Heart left ventricle (tissue), 16 donors: ENCODE measurements at regions of chr9 and their contacts with region 1.

Region 1: DNA sequence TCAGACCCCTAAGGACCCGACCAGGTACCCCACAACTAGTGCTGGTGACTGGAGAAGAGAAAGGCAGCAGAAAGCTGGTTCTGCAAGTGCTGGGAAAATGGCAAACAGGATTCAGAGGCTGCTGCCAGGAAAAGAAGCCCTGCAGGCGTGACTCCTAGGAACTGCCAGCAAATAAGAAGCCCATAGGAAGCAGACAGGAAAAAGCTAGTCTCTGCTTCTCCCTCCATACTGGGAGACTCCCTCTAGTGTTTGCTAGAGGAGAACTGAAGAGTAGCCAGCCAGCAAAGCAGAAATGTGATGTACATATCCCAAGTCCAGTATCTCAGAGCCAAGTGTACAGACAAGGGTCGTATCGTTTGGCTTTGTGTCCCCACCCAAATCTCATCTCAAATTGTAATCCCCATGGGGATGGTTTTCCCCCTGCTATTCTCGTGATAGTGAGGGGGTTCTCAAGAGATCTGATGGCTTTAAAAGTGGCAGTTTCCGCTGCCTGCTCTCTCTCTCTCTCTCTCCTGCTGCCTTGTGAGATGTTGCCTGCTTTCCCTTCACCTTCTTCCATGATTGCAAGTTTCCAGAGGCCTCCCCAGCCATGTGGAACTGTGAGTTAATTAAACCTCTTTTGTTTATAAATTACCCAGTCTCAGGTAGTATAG is 38.1 kb upstream of the TUSC1 start:
- DNase-seq: peak in 1 of 5 donors; percentile 20
- ATAC-seq: peak; percentile 54 to 78 (median 55)
- H3K4me3 ChIP-seq: no peak overlapping the region
- H3K27ac ChIP-seq: no peak overlapping the region
- H3K4me1 ChIP-seq: no peaks in the 10 kb centered on the region
- H3K27me3 ChIP-seq: no peaks in the 10 kb centered on the region
- CTCF ChIP-seq: peak in 9 of 12 donors; percentile 13 to 56 (median 35)
- POLR2A ChIP-seq: no peak

Region 2: DNA sequence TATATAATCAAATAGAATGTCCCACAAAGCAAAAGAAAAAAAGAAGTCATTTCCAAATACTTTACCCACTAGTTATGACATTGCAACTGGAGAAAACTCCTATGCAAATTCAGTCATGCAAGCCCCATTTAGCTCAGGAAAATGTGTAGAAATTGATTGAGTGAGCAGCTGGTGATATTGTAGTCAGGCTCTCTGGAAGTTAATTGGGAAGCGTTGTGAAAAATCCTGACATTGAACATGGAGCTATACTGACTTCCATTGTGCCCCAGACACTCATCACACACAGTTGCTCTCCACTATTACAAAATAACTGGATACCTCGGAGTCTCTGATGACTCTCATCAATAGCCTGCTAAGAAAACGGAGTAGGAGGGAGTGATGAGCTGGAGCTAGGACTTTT is 87.1 kb before region 1 on chr9:
- intact Hi-C with region 1: loop called in 1 of 10 experiments (anchors 10 kb)
- DNase-seq: no peak
- ATAC-seq: no peak
- H3K4me3 ChIP-seq: no peak overlapping the region
- H3K27ac ChIP-seq: no peak overlapping the region
- H3K4me1 ChIP-seq: no peaks in the 10 kb centered on the region
- H3K27me3 ChIP-seq: no peaks in the 10 kb centered on the region
- CTCF ChIP-seq: no peak
- POLR2A ChIP-seq: no peak

Region 3: DNA sequence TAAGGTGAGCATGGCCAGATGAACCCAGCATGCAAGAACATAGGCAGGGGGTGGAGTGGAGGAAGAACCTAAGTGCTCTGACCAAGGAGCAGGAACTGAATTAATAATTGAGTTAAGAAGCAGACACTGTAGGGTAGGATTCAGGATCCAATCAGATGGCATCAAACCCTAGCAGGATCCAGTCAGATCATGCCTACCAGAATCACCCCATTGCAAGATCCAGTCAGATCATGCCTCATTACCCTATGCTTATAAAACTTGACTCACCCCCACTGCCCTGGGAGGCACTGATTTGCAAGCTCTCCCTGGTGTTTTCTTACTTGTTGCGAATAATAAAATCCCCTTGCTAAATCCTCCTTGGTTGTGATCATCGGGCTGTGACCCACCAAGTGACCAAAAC is 57.8 kb before region 1 on chr9:
- intact Hi-C with region 1: no loop called
- DNase-seq: no peak
- ATAC-seq: no peak
- H3K4me3 ChIP-seq: no peak overlapping the region
- H3K27ac ChIP-seq: no peak overlapping the region
- H3K4me1 ChIP-seq: no peaks in the 10 kb centered on the region
- H3K27me3 ChIP-seq: no peaks in the 10 kb centered on the region
- CTCF ChIP-seq: no peak
- POLR2A ChIP-seq: no peak